Panc1 (cell line): ENCODE measurements at regions of chr1 and their contacts with region 1.

Region 1: GRCh38 chr1:202184750-202185460 is 8.7 kb upstream of the LGR6 start:
- DNase-seq: peak; percentile 58
- ATAC-seq: peak; percentile 84
- H3K4me3 ChIP-seq: peak overlapping the region in 1 of 2 experiments; percentile 23; a peak in 2 of 4 replicates
- H3K27ac ChIP-seq: no peak overlapping the region
- H3K4me1 ChIP-seq: peaks cover 7% of the 10 kb centered on the region
- H3K27me3 ChIP-seq: no peaks in the 10 kb centered on the region
- CTCF ChIP-seq: peak; percentile 93

Region 2: GRCh38 chr1:202135221-202135721 is 49.6 kb before region 1 on chr1:
- CTCF ChIA-PET with region 1: no interaction called
- POLR2A ChIA-PET with region 1: no interaction called
- in situ Hi-C with region 1: no loop called
- intact Hi-C with region 1: no loop called
- DNase-seq: peak; percentile 42
- ATAC-seq: peak; percentile 93
- H3K4me3 ChIP-seq: no peak overlapping the region
- H3K27ac ChIP-seq: no peak overlapping the region; the same call in 1 of the 2 replicates
- H3K4me1 ChIP-seq: peaks cover 2% of the 10 kb centered on the region; the same call in 1 of the 2 replicates
- H3K27me3 ChIP-seq: no peaks in the 10 kb centered on the region
- CTCF ChIP-seq: peak; percentile 94

Region 3: GRCh38 chr1:202315576-202316168 is 130.8 kb after region 1 on chr1:
- CTCF ChIA-PET with region 1: interaction called, 11 read pairs
- POLR2A ChIA-PET with region 1: interaction called, 9 read pairs
- in situ Hi-C with region 1: no loop called
- intact Hi-C with region 1: loop called (anchors 1 kb)
- DNase-seq: peak; percentile 71
- ATAC-seq: peak; percentile 96
- H3K4me3 ChIP-seq: no peak overlapping the region
- H3K27ac ChIP-seq: no peak overlapping the region
- H3K4me1 ChIP-seq: no peaks in the 10 kb centered on the region
- H3K27me3 ChIP-seq: no peaks in the 10 kb centered on the region
- CTCF ChIP-seq: peak; percentile 97

Region 4: GRCh38 chr1:202329891-202330290 is 145.0 kb after region 1 on chr1:
- CTCF ChIA-PET with region 1: interaction called, 12 read pairs
- POLR2A ChIA-PET with region 1: no interaction called
- in situ Hi-C with region 1: no loop called
- intact Hi-C with region 1: no loop called
- DNase-seq: no peak
- ATAC-seq: peak; percentile 59; the same call in 1 of the 2 replicates
- H3K4me3 ChIP-seq: no peak overlapping the region
- H3K27ac ChIP-seq: no peak overlapping the region
- H3K4me1 ChIP-seq: no peaks in the 10 kb centered on the region
- H3K27me3 ChIP-seq: no peaks in the 10 kb centered on the region
- CTCF ChIP-seq: peak; percentile 38; the same call in 1 of the 2 replicates

Region 5: DNA sequence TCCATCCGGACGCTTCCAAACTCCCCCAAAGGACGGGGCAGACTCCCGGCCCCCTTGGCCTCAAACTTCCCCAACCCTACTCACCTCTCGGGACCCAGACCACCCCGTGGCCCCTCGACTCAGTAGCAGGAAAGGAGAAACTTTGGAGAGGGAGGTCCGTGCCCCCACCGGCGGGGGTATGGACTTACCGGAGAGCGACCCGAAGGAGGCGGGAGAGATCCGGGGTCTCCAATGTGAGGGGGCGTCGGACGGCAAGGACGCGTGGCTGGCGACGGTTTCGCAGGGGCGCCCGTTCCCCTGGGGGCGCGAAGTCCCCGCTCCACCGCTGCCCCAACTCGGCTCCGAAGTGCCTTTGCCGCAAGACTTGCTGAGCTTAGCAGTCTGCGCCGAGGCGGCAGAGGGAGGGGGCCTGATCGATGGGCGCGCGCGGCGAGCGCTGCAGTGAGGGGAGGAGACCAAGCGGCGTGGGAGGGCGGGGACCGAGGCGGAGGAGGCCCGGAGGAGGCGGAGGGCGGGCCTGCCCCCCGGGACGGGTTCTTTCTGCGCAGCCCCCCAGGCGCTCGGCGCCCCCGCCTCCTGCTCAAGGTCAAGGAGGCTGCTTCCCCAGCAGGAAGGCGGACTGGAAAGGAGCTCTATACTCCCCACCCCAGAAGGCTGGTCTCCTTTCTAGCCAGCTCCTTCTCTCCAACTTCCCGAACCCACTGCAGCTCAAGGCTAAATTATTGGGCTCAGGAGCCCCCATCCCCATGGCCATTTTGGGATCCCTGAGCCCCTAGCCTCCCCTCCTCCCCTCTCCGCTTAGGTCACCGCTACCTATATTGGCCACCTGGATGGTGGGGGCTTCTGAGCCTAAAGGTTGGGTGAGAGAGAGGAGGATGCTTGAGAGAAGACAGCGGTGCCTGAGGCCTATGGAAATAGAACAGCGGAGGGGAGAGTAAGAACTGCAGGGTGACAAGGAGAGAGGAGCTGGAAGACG is 525.5 kb after region 1 on chr1 and contains the start of gene SYT2:
- CTCF ChIA-PET with region 1: no interaction called
- POLR2A ChIA-PET with region 1: no interaction called
- in situ Hi-C with region 1: no loop called
- intact Hi-C with region 1: loop called (anchors 10 kb)
- DNase-seq: no peak
- ATAC-seq: peak; percentile 70
- H3K4me3 ChIP-seq: peak within 1 kb of the TSS; percentile 26 to 43
- H3K27ac ChIP-seq: no peak within 1 kb of the TSS
- H3K4me1 ChIP-seq: no peaks in the 10 kb centered on the region
- H3K27me3 ChIP-seq: peaks cover 16% of the 10 kb centered on the region
- CTCF ChIP-seq: no peak
- total RNA-seq, gene SYT2: 0.03 TPM